Activated naive CD4-positive, alpha-beta T cell treated with anti-CD3 and anti-CD28 coated beads for 36 hours (primary cell): ENCODE measurements at regions of chr7 and their contacts with region 1.

Region 1: GRCh38 chr7:102412548-102412947 is 16.4 kb downstream of the PRKRIP1 start:
- DNase-seq: peak; percentile 65
- H3K4me3 Mint-ChIP-seq: no peak overlapping the region
- H3K27ac Mint-ChIP-seq: no peak overlapping the region
- H3K4me1 Mint-ChIP-seq: peaks cover 40% of the 10 kb centered on the region
- H3K27me3 Mint-ChIP-seq: no peaks in the 10 kb centered on the region

Region 2: DNA sequence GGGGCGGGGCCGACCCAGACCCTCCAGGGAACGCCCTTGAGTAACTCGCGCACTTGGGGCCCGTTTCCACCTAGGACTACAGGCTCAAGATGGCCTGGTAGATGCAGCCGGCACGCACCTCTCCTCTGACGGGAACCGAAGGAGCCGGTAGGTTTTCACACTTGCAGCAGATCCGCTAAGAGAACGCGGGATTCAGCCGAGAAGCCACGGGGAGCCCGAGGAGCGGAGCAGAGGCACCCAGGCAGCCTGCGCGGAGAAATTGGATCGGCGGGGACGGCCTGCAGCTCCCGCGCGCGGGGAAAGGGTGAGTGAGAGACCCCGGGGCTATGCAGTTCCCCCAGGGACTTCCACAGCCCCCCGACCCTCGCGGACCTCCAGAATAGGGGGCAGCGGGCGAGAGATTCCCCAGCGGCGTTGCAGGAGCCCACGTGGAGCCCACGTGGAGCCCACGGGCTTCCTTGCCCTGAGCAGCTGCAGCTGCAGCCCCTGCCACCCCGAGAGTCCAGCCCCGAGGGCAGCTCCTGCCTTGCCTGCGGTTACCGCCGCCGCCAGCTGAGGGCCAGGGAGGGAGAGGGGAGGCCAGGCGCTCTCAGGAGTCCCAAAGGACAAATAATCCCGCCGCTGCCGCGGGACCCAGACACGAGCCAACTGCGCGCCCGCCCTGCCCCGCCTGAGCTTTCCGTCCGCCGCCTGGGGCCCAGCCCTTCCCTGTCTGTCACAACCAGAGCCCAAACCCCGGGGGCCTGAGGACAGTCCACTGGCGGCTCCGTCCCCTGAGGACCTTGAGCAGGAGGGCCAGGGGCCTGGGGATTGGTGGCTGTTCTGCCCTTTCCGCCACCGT is 1104.1 kb before region 1 on chr7:
- CTCF ChIA-PET with region 1: no interaction called
- intact Hi-C with region 1: no loop called
- DNase-seq: peak; percentile 67
- H3K4me3 Mint-ChIP-seq: peak overlapping the region; percentile 95
- H3K27ac Mint-ChIP-seq: no peak overlapping the region
- H3K4me1 Mint-ChIP-seq: peaks cover 13% of the 10 kb centered on the region
- H3K27me3 Mint-ChIP-seq: peaks cover 24% of the 10 kb centered on the region

Region 3: GRCh38 chr7:102189756-102190155 is 222.8 kb before region 1 on chr7:
- CTCF ChIA-PET with region 1: no interaction called
- intact Hi-C with region 1: no loop called
- DNase-seq: no peak
- H3K4me3 Mint-ChIP-seq: no peak overlapping the region
- H3K27ac Mint-ChIP-seq: no peak overlapping the region
- H3K4me1 Mint-ChIP-seq: no peaks in the 10 kb centered on the region
- H3K27me3 Mint-ChIP-seq: no peaks in the 10 kb centered on the region

Region 4: DNA sequence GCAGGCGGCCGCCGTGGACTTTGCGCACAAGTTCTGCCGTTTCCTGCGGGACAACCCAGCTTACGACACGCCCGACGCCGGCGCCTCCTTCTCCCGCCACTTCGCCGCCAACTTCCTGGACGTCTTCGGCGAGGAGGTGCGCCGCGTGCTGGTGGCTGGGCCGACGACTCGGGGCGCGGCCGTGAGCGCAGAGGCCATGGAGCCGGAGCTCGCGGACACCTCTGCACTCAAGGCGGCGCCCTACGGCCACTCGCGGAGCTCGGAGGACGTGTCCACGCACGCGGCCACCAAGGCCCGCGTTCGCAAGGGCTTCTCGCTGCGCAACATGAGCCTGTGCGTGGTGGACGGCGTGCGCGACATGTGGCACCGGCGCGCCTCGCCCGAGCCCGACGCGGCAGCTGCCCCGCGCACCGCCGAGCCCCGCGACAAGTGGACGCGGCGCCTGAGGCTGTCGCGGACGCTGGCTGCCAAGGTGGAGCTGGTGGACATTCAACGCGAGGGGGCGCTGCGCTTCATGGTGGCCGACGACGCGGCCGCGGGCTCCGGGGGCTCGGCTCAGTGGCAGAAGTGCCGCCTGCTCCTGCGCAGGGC is 111.8 kb before region 1 on chr7:
- CTCF ChIA-PET with region 1: no interaction called
- intact Hi-C with region 1: no loop called
- DNase-seq: no peak
- H3K4me3 Mint-ChIP-seq: no peak overlapping the region
- H3K27ac Mint-ChIP-seq: no peak overlapping the region
- H3K4me1 Mint-ChIP-seq: no peaks in the 10 kb centered on the region
- H3K27me3 Mint-ChIP-seq: no peaks in the 10 kb centered on the region

Region 5: DNA sequence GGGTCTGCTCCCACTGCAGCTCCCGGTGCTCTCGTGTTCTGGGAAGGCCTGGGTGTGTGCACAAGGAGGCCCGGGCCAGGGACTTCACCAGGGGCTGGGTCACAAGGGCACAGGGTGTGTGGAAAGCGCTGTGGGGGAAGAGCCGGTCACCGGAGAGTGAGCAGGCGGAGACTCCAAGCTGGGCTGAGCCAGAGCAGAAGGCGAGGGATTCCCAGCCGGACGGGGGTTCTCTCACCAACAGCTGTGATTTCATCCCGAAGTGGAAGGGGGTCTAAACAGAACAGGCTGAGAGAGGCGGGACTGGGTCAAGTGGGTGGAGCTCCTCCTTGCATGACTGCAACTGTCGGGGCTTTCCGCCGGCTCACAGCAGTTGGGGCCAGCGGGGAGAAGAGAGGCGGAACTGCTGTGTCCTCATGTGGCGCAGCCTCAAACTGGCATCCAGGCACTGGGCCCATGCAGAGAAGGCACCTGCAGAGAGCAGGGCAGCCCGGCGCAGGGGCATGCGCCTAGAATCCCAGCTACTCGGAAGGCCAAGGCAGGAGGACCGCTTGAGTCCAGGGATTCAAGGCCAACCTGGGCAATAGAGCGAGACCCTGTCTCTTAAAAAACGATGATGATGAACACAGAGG is 13.2 kb after region 1 on chr7:
- CTCF ChIA-PET with region 1: interaction called, 17 read pairs
- intact Hi-C with region 1: loop called (anchors 1 kb)
- DNase-seq: peak; percentile 93
- H3K4me3 Mint-ChIP-seq: peak overlapping the region; percentile 77
- H3K27ac Mint-ChIP-seq: peak overlapping the region; percentile 100
- H3K4me1 Mint-ChIP-seq: peaks cover 67% of the 10 kb centered on the region
- H3K27me3 Mint-ChIP-seq: no peaks in the 10 kb centered on the region

Region 6: GRCh38 chr7:102433219-102434038 is 20.9 kb after region 1 on chr7 and contains the start of gene ORAI2:
- CTCF ChIA-PET with region 1: interaction called, 17 read pairs
- intact Hi-C with region 1: loop called (anchors 1 kb)
- DNase-seq: peak; percentile 81
- H3K4me3 Mint-ChIP-seq: peak within 1 kb of the TSS; percentile 79
- H3K27ac Mint-ChIP-seq: peak within 1 kb of the TSS; percentile 98
- H3K4me1 Mint-ChIP-seq: peaks cover 49% of the 10 kb centered on the region
- H3K27me3 Mint-ChIP-seq: no peaks in the 10 kb centered on the region
- total RNA-seq, gene ORAI2: 15.4 to 16.4 TPM